Activated CD8-positive, alpha-beta T cell treated with anti-CD3 and anti-CD28 coated beads, Interleukin-2, amount 10 ng/mL, durations not matched to agents 7 days and 5 days (primary cell): ENCODE measurements at regions of chr10 and their contacts with region 1.

Region 1: DNA sequence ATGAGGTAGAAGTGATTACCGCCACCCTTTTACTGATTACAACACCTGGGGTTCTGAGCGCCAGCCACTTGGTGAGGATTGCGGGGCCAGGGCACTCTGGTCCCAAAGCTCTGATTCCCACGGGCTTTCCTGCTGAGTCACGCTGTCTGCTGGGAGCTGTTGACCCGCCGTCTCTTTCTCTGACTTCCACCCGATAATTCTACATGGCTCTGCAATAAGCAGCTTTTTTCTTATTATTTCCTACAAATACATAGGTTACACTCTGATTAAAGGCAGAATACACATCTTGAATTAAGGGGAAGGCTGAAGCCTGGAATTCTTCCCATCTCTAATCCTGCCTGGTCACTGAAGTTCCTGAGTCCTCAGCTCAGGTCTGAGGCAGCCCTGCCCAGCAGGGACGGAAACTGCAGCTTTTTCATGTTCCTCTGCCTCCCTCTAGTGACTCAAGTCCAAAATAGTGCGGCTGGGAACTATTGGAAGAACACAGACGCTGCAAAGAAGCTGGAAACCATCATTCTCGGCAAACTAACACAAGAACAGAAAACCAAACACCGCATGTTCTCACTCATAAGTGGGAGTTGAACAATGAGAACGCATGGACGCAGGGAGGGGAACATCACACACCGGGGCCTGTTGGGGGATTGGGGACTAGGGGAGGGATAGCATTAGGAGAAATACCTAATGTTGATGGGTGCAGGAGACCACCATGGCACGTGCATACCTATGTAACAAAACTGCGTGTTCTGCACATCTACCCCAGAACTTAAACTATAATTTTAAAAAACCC is 178.3 kb downstream of the PRKCQ start:
- DNase-seq: peak; percentile 75
- ATAC-seq: peak; percentile 92
- H3K4me3 Mint-ChIP-seq: no peak overlapping the region
- H3K27ac Mint-ChIP-seq: peak overlapping the region; percentile 15
- H3K4me1 Mint-ChIP-seq: peaks cover 41% of the 10 kb centered on the region
- H3K27me3 Mint-ChIP-seq: peaks cover 6% of the 10 kb centered on the region

Region 2: DNA sequence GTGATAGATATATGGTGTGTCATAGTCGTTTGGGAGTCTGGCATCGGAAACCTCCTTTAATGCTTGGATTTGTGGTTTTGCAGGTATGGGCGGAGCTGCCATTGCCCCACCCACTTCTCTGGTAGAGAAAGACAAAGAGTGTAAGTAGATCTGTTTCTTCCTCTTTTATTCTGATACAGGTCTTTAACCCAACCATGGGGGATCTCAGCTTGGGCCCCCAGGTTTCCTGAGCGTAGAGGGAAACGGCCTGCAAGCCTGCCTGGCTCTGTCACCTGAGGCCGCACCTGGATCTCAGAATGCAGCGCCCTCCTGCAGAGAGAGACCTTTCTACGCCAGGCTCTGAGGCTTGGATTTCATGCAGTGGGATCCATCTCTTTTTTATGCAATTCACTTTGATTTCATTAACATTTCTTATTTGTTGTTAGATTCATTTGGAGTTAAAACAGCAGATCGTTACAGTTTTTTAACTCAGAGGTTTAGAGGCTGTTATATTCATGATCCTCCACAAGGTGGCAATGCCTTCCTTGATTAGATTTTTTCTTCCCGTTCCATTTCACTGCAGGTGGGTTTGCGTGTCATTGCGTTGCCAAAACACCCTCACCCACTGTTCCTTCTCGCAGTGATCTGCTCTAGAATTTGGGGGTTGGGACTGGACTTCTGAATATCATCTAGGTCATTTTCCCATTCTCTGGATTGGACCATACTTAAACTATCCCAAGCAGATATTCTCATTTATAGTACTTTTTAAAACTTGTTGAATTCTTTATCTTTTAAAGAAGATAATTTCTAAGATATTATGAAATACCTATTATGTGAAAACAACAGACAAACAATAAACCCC is 292.9 kb before region 1 on chr10:
- CTCF ChIA-PET with region 1: interaction called, 35 read pairs
- POLR2A ChIA-PET with region 1: no interaction called
- DNase-seq: peak; percentile 52
- ATAC-seq: peak; percentile 54
- H3K4me3 Mint-ChIP-seq: no peak overlapping the region
- H3K27ac Mint-ChIP-seq: peak overlapping the region; percentile 81
- H3K4me1 Mint-ChIP-seq: peaks cover 38% of the 10 kb centered on the region
- H3K27me3 Mint-ChIP-seq: no peaks in the 10 kb centered on the region

Region 3: GRCh38 chr10:6163364-6164270 is 238.1 kb before region 1 on chr10:
- CTCF ChIA-PET with region 1: interaction called, 12 read pairs
- POLR2A ChIA-PET with region 1: no interaction called
- DNase-seq: peak; percentile 93
- ATAC-seq: peak; percentile 97
- H3K4me3 Mint-ChIP-seq: peak overlapping the region; percentile 96
- H3K27ac Mint-ChIP-seq: peak overlapping the region; percentile 98
- H3K4me1 Mint-ChIP-seq: peaks cover 39% of the 10 kb centered on the region
- H3K27me3 Mint-ChIP-seq: no peaks in the 10 kb centered on the region

Region 4: DNA sequence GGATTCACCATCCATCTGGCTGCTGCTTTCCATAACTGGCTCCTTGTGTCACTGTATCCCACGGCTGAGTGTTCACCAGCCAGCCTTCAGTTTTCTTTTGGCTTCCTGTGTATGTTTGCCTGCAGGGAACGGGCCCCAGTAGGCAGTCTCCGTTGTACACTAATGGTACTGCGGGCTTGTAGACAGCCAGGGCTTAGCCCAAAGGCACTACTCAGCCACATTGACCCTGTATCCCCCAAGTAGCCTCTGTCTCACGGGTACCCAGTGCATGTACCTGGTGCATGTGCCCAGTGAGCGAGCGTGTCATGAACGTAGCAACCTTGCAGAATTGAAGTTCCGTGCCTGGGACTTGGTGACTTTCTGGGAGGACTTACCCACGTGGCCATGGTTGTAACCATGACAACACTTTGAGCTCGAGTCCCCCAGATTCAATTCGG is 192.9 kb before region 1 on chr10:
- CTCF ChIA-PET with region 1: interaction called, 226 read pairs
- POLR2A ChIA-PET with region 1: no interaction called
- DNase-seq: no peak
- ATAC-seq: peak; percentile 23
- H3K4me3 Mint-ChIP-seq: no peak overlapping the region
- H3K27ac Mint-ChIP-seq: peak overlapping the region; percentile 66
- H3K4me1 Mint-ChIP-seq: peaks cover 40% of the 10 kb centered on the region
- H3K27me3 Mint-ChIP-seq: no peaks in the 10 kb centered on the region

Region 5: DNA sequence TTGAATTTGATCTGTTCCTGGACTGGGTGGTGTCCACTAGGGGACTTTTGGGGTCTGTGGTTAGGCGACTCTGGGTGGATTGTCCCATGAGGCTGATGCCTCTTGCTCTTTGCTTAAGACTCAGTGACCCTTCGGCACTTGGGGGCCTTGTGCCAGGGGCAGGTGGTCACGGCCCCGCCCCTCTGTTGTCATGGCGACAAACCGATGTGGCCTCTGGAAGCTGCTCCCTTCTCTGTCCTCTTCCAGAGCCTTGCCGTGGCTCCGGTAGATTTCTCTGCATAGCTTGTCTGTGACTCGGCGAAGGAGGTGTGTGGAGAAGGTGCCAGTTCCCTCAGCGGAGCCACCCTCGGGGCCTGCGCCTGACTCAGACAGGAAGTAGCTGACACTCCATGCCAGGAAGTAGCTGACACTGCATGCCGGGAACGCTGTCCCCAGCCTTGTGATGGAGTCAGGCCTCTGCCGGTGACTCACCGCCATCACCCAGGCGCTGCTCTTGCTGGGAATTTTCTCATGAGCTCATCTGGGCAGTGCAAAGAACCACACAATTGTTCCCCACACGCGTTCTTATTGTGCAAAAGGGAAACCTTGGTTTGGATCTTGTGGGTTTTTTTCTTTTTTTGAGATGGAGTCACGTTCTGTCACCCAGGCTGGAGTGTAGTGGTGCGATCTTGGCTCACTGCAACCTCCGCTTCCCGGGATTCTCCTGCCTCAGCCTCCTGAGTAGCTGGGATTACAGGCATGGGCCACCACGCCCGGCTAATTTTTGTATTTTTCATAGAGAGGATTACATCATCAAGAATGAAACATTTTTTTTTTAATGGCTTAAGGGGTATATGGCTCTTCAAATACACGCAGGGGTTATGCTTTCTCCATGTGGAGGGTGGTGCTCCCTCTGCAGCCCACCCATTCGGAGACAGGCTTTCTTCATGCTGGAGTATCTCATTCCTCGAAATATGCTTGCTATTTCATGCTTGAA is 126.4 kb before region 1 on chr10:
- CTCF ChIA-PET with region 1: interaction called, 11 read pairs
- POLR2A ChIA-PET with region 1: no interaction called
- DNase-seq: peak; percentile 87
- ATAC-seq: peak; percentile 81
- H3K4me3 Mint-ChIP-seq: peak overlapping the region; percentile 57
- H3K27ac Mint-ChIP-seq: peak overlapping the region; percentile 95
- H3K4me1 Mint-ChIP-seq: peaks cover 84% of the 10 kb centered on the region
- H3K27me3 Mint-ChIP-seq: no peaks in the 10 kb centered on the region

Region 6: GRCh38 chr10:6310977-6311376 is 90.8 kb before region 1 on chr10:
- CTCF ChIA-PET with region 1: interaction called, 11 read pairs
- POLR2A ChIA-PET with region 1: no interaction called
- DNase-seq: no peak
- ATAC-seq: no peak
- H3K4me3 Mint-ChIP-seq: no peak overlapping the region
- H3K27ac Mint-ChIP-seq: no peak overlapping the region
- H3K4me1 Mint-ChIP-seq: peaks cover 16% of the 10 kb centered on the region
- H3K27me3 Mint-ChIP-seq: peaks cover 3% of the 10 kb centered on the region

Region 7: DNA sequence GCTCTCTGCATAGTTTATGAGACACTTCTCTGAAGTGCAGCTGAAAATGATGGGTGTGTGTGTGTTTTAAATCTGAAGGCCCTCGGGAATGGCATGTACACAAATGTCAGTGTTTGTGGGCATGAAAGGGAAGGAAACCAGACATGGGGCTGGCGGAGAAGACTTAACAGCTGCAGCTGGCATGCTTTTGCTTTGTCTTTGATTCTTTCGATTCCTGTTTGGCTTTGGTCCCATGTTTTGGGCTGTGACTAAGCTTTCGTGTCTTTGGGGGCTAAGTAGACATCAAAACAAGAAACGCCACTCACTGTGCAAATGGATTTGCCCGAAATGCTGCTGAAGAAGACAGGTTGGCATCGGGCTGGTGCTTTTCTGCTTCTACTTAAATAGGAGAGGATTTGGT is 19.7 kb before region 1 on chr10:
- CTCF ChIA-PET with region 1: interaction called, 24 read pairs
- POLR2A ChIA-PET with region 1: no interaction called
- DNase-seq: peak; percentile 51
- ATAC-seq: peak; percentile 75
- H3K4me3 Mint-ChIP-seq: peak overlapping the region; percentile 60
- H3K27ac Mint-ChIP-seq: peak overlapping the region; percentile 73
- H3K4me1 Mint-ChIP-seq: peaks cover 37% of the 10 kb centered on the region
- H3K27me3 Mint-ChIP-seq: no peaks in the 10 kb centered on the region

Region 8: DNA sequence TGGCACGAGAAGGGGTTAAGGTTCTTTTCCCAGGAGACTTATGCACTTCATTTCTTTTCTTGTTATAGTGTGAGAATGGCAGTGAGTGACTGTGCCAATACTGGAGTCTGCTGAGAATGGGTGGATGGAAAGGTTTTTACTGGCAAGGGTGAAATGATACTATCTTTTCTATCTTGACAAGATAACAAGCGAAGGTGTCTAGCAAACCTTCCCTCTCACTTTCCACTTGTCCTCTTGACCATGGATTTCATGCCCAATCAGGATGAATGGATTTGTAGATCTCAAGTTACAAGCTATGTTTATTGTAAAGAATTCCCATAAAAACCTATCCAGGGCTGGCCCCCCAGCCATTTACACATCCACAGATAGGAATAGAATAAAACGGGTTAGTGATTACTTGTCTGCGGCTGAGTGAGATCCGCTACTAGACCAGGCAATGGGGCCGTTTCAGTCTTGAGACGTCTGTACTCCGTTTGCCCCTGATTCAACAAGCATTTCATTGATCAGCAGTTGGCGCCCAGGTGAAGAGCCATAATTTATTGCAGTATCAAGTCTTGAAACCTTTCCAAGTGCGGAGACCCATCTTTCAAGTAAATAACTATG is 25.7 kb after region 1 on chr10:
- CTCF ChIA-PET with region 1: no interaction called
- POLR2A ChIA-PET with region 1: no interaction called
- DNase-seq: peak; percentile 1
- ATAC-seq: no peak
- H3K4me3 Mint-ChIP-seq: no peak overlapping the region
- H3K27ac Mint-ChIP-seq: peak overlapping the region; percentile 28
- H3K4me1 Mint-ChIP-seq: peaks cover 14% of the 10 kb centered on the region
- H3K27me3 Mint-ChIP-seq: no peaks in the 10 kb centered on the region

Region 9: DNA sequence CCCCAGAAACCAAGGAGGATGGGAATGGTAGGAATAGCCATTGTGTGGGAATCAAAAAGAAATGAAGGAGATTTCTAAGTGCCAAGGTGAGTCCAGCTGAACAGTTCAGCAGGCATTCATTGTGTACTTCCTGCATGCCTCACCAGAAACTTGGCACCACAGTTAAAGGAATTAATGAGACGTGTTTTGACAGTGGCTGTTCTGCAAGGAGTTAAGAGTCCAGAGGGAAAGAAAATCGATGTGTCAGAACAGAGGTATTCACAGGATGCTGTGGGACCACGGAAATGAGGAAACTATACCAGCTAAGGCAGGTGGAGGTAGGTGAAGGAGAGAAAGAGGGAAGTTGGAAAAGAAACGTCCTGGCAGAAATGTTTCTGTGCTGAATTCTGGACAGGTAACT is 100.2 kb after region 1 on chr10:
- CTCF ChIA-PET with region 1: no interaction called
- POLR2A ChIA-PET with region 1: no interaction called
- DNase-seq: peak; percentile 17
- ATAC-seq: no peak
- H3K4me3 Mint-ChIP-seq: no peak overlapping the region
- H3K27ac Mint-ChIP-seq: peak overlapping the region; percentile 50
- H3K4me1 Mint-ChIP-seq: peaks cover 47% of the 10 kb centered on the region
- H3K27me3 Mint-ChIP-seq: no peaks in the 10 kb centered on the region